ENCODE measurements at regions of chr6 and their contacts with region 1.

Region 1: DNA sequence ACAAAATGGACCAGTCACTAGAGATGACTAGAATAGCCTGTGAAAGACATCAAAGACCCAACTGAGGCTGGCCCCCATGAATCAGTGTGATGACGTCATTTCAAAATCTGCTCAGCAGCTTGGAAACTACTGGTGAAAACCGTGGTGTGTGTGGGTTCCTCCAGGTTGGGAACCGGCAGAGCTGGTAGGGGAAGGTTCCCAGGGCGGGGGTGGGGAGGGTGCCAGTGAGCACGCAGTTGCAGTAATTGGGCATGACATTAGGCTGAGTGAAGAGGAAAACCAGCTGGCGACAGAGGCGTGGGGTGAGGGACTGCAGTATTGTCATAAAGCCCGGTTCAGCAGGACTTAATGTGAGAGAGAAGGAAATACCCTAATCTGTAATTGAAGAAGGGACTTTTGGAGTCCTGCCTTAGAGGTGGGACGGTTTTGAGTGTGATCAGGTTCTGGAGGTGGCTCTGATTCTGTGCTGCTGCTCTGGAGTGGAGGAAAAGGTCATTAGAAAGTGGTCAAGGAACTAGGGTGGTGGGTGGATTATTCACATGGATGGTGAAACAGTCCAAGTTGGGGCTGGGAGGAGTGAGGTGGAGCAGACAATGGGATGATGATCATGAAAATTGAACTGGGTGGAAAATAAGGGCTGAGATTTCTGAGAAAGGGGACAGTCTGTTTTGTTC is 52.0 kb upstream of the MTHFD1L start:
- DNase-seq: peak; percentile 86
- ATAC-seq: peak; percentile 79
- H3K4me3 Mint-ChIP-seq: peak overlapping the region; percentile 8
- H3K27ac Mint-ChIP-seq: peak overlapping the region; percentile 94
- H3K4me1 Mint-ChIP-seq: peaks cover 28% of the 10 kb centered on the region
- H3K27me3 Mint-ChIP-seq: peaks cover 12% of the 10 kb centered on the region

Region 2: GRCh38 chr6:149934249-149935156 is 879.0 kb before region 1 on chr6:
- CTCF ChIA-PET with region 1: no interaction called
- POLR2A ChIA-PET with region 1: no interaction called
- intact Hi-C with region 1: loop called (anchors 2 to 5 kb)
- DNase-seq: peak; percentile 84
- ATAC-seq: peak; percentile 57
- H3K4me3 Mint-ChIP-seq: no peak overlapping the region
- H3K27ac Mint-ChIP-seq: no peak overlapping the region
- H3K4me1 Mint-ChIP-seq: peaks cover 21% of the 10 kb centered on the region
- H3K27me3 Mint-ChIP-seq: peaks cover 74% of the 10 kb centered on the region

Region 3: DNA sequence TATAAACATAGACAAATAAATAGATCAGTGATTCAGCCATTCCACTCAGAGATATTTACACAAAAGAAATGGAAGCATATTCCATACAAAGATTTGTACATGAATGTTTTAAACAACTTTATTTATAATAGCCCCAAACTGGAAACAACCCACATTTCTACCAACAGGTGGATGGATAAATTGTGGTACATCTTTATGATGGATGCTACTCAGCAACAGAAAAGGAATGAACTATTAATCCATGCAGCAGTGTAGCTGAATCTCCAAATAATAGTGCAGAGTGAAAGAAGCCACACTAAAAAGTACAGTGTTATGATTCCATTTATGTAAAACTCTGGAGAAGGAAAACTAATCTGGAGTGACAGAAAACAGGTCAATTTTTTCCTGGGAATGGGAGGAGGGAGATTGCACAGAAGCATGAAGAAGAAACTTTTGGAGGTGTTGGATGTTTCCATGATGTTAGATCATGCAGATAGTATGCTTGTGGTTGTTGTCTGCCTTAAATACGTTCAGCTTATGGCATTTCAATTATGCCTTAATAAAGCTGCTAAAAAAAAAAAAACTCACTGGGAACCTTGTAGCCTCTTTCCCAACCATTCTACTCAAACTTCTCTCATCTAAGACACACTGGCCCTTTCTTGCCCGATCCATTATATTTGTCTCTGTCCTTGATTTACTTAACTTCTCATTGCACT is 569.7 kb before region 1 on chr6:
- CTCF ChIA-PET with region 1: no interaction called
- POLR2A ChIA-PET with region 1: no interaction called
- intact Hi-C with region 1: loop called in 1 of 2 experiments (anchors 10 kb)
- DNase-seq: no peak
- ATAC-seq: no peak
- H3K4me3 Mint-ChIP-seq: no peak overlapping the region
- H3K27ac Mint-ChIP-seq: no peak overlapping the region
- H3K4me1 Mint-ChIP-seq: peaks cover 22% of the 10 kb centered on the region
- H3K27me3 Mint-ChIP-seq: peaks cover 30% of the 10 kb centered on the region

Region 4: GRCh38 chr6:150417899-150418826 is 395.3 kb before region 1 on chr6:
- CTCF ChIA-PET with region 1: interaction called, 98 read pairs
- POLR2A ChIA-PET with region 1: interaction called, 6 read pairs
- intact Hi-C with region 1: loop called (anchors 1 kb)
- DNase-seq: peak; percentile 40
- ATAC-seq: peak; percentile 85
- H3K4me3 Mint-ChIP-seq: peak overlapping the region; percentile 61
- H3K27ac Mint-ChIP-seq: peak overlapping the region; percentile 83
- H3K4me1 Mint-ChIP-seq: peaks cover 40% of the 10 kb centered on the region
- H3K27me3 Mint-ChIP-seq: peaks cover 20% of the 10 kb centered on the region

Region 5: DNA sequence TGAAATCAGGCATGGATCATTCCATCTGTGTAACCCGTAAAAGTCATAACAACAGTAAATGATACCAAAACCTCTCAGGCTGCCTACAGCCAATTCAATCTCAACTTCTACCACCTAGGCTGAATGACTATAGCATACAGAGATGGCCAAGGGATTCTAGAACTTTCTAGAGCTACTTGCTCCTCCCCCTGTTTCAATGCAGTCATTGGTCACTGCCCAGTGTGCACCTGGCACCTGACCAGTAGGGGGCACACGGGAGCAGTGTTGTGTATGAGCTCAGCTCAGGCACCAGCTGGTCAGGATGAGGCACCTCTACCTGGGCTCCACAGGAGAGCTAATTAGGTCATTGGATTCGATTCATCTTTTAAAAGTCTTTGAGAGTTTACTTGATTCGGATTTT is 127.6 kb before region 1 on chr6:
- CTCF ChIA-PET with region 1: interaction called, 23 read pairs
- POLR2A ChIA-PET with region 1: no interaction called
- intact Hi-C with region 1: loop called in 1 of 2 experiments (anchors 1 kb)
- DNase-seq: peak; percentile 81
- ATAC-seq: peak; percentile 92
- H3K4me3 Mint-ChIP-seq: no peak overlapping the region
- H3K27ac Mint-ChIP-seq: no peak overlapping the region
- H3K4me1 Mint-ChIP-seq: no peaks in the 10 kb centered on the region
- H3K27me3 Mint-ChIP-seq: no peaks in the 10 kb centered on the region

Region 6: GRCh38 chr6:151335930-151336329 is 522.5 kb after region 1 on chr6:
- CTCF ChIA-PET with region 1: interaction called, 3 read pairs
- POLR2A ChIA-PET with region 1: no interaction called
- intact Hi-C with region 1: loop called in 1 of 2 experiments (anchors 1 kb)
- DNase-seq: no peak
- ATAC-seq: no peak
- H3K4me3 Mint-ChIP-seq: no peak overlapping the region
- H3K27ac Mint-ChIP-seq: no peak overlapping the region
- H3K4me1 Mint-ChIP-seq: no peaks in the 10 kb centered on the region
- H3K27me3 Mint-ChIP-seq: no peaks in the 10 kb centered on the region